ENCODE measurements at regions of chr9 and their contacts with region 1.

Region 1: GRCh38 chr9:129177791-129178559 is at the start of gene IER5L:
- DNase-seq: peak; percentile 95 to 99 (median 97)
- H3K4me3 ChIP-seq: peak within 1 kb of the TSS; percentile 33 to 96 (median 82)
- H3K27ac ChIP-seq: peak within 1 kb of the TSS; percentile 93 to 99 (median 96)
- H3K4me1 ChIP-seq: peaks cover 11 to 32% of the 10 kb centered on the region in 2 donors
- H3K27me3 ChIP-seq: no peaks in the 10 kb centered on the region
- CTCF ChIP-seq: no peak
- POLR2A ChIP-seq: peak; percentile 96
- total RNA-seq, gene IER5L: 2.3 to 47.6 (median 17.5) TPM

Region 2: DNA sequence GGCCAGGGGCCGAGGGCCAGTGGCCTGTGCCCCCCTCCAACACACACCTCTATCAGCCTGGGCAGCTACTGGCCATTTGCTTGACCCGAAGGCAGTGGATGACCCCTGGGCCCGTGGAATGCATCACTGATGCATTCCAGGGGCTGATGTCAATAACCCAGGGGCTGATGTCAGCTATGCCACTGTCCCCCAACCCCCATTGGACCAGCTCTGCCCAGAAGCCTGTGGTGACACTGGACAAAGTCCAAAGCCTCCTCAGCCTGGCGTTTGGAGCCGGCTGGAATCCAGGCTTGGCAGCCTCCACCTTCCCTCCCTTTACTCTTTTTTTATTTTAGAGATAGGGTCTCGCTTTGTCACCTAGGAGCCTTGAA is 302.2 kb before region 1 on chr9:
- intact Hi-C with region 1: no loop called
- DNase-seq: no peak
- H3K4me3 ChIP-seq: no peak overlapping the region
- H3K27ac ChIP-seq: no peak overlapping the region
- H3K4me1 ChIP-seq: peaks cover 0 to 4% of the 10 kb centered on the region in 2 donors
- H3K27me3 ChIP-seq: no peaks in the 10 kb centered on the region
- CTCF ChIP-seq: no peak
- POLR2A ChIP-seq: no peak

Region 3: GRCh38 chr9:129139993-129140396 is 38.0 kb before region 1 on chr9:
- intact Hi-C with region 1: loop called in 1 of 2 experiments (anchors 5 kb)
- DNase-seq: peak; percentile 90 to 98 (median 97)
- H3K4me3 ChIP-seq: peak overlapping the region in 3 of 4 donors; percentile 26 to 50 (median 45)
- H3K27ac ChIP-seq: peak overlapping the region; percentile 98 to 100 (median 100)
- H3K4me1 ChIP-seq: peaks cover 57 to 78% of the 10 kb centered on the region in 2 donors
- H3K27me3 ChIP-seq: no peaks in the 10 kb centered on the region
- CTCF ChIP-seq: no peak
- POLR2A ChIP-seq: peak; percentile 20 to 83

Region 4: DNA sequence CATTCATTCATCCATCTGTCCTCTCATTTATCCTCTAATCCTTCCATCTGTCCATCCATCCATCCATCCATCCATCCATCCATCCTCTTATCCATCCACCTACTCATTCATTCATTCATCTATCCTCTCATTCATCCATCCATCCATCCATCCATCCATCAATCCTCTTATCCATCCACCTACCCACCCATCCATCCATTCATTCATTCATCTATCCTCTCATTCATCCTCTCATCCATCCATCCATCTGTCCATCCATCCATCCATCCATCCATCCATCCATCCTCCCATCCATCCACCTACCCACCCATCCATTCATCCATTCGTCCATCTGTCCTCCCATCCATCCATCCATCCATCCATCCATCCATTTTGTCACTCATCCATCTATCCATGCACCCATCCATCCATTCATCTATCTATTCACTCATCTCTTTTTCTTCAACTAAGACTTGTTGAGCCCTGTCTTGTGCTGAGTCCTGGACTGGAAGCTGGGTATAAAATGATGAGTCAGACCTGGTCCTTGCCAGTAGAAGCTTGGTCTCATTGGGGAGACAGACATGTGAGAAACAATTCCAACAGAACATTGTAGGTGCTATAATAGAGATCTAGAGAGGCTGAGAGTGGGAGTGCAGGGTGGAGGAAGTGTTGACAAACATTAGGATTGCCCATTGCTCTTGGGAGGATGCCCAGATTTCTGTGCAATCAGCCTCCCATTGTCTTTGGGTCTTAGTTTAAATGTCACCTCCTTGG is 55.0 kb after region 1 on chr9:
- intact Hi-C with region 1: loop called in 1 of 2 experiments (anchors 5 kb)
- DNase-seq: no peak
- H3K4me3 ChIP-seq: no peak overlapping the region
- H3K27ac ChIP-seq: no peak overlapping the region
- H3K4me1 ChIP-seq: peaks cover 8 to 9% of the 10 kb centered on the region in 2 donors
- H3K27me3 ChIP-seq: no peaks in the 10 kb centered on the region
- CTCF ChIP-seq: no peak
- POLR2A ChIP-seq: no peak

Region 5: GRCh38 chr9:129460323-129461261 is 282.6 kb after region 1 on chr9:
- intact Hi-C with region 1: loop called in 1 of 2 experiments (anchors 10 kb)
- DNase-seq: peak; percentile 97 to 99 (median 98)
- H3K4me3 ChIP-seq: peak overlapping the region in 1 of 4 donors; percentile 46
- H3K27ac ChIP-seq: peak overlapping the region; percentile 92 to 100 (median 96)
- H3K4me1 ChIP-seq: peaks cover 37 to 46% of the 10 kb centered on the region in 2 donors
- H3K27me3 ChIP-seq: no peaks in the 10 kb centered on the region
- CTCF ChIP-seq: peak in 3 of 6 experiments; percentile 26 to 40 (median 28)
- POLR2A ChIP-seq: peak; percentile 64 to 92

Region 6: GRCh38 chr9:129495534-129496325 is 317.8 kb after region 1 on chr9:
- intact Hi-C with region 1: loop called in 1 of 2 experiments (anchors 5 kb)
- DNase-seq: peak; percentile 95 to 98 (median 96)
- H3K4me3 ChIP-seq: peak overlapping the region in 2 of 4 donors; percentile 74 to 79
- H3K27ac ChIP-seq: peak overlapping the region; percentile 91 to 100 (median 95)
- H3K4me1 ChIP-seq: peaks cover 42 to 73% of the 10 kb centered on the region in 2 donors
- H3K27me3 ChIP-seq: no peaks in the 10 kb centered on the region
- CTCF ChIP-seq: peak in 1 of 6 experiments; percentile 14
- POLR2A ChIP-seq: peak in 1 of 2 donors; percentile 16